Posterior vena cava (tissue), 2 donors: ENCODE measurements at regions of chr9 and their contacts with region 1.

Region 1: DNA sequence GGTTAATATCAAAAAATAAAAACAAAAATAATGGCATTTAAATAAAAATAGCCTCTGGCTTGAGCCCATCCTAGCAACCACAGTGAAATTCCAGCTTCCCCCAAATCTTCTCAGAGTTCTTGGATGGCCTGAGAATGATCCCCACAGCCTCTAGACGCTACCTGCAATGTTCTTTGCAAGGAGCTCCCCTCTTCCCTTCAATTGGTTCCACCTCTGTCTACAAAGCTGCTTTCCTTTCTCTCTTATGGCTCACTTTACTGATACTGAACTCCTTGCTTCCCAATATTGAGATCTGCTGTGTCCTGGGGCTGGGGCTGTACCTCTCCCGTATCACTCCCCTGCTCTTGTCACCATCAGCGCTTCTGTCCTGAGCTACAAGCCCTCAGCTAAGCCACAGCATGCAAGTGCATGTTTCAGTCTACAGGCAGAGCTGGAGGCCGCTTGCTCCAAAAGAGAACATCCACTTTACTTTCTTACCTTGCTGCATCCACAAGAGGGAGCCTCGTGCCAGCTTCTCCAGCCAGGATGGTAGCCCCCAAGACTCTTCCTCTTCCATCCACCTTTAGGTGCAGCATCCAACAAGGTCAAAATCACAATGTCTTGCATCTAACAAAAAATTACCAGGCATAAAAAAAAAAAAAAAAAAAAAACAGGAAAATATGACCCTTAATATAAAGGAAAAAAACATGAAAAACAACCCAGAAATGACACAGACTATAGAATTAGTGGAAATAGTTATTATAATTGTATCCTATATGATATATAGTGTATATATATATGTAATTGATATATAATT is 57.4 kb upstream of the PRSS3 start:
- DNase-seq: no peak

Region 2: DNA sequence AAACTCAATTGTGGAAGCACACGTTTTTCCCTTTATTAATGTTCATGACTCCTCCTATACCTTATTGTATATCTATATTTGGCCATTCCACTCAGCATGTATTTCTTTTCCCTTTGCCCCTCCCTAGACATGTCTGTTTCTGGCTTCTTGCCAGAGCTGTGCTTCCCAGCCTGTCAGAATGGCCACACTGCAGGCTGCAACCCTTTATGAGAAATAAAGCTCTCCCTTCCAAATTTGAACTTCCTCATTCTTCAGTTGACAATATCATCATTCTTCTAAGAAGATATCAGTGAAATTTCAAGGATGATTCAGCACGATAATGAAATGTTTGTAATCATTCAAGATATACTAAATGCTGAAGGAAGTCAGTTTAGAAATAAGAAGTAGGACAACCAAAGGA is 50.2 kb before region 1 on chr9:
- intact Hi-C with region 1: loop called in 1 of 2 experiments (anchors 2 kb)
- DNase-seq: no peak